ENCODE measurements at regions of chr17 and their contacts with region 1.

Region 1: GRCh38 chr17:39235555-39236449 is 10.1 kb upstream of the STAC2 start:
- DNase-seq: peak; percentile 82 to 91 (median 90)
- H3K4me3 ChIP-seq: no peak overlapping the region
- H3K27ac ChIP-seq: no peak overlapping the region
- H3K4me1 ChIP-seq: peaks cover 0 to 30% (median 21%) of the 10 kb centered on the region in 4 experiments
- H3K27me3 ChIP-seq: peaks cover 0 to 2% (median 0%) of the 10 kb centered on the region in 5 experiments

Region 2: DNA sequence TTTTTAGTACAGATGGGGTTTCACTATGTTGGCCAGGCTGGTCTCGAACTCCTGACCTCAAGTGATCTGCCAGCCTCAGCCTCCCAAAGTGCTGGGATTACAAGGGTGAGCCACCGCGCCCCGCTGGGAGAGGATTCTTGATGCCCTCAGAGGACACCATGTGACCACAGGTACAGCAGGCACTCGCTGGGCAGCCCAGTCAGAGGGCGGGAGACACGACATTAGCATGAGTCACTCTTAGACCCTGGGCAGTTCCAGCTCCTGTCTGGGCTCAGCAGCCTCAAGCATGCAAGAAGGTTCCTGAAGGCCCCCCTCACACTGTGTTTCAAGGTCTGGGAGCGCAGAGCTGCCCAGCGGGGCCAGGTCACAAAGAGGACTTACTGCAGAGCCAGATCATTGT is 21.9 kb before region 1 on chr17:
- CTCF ChIA-PET with region 1: interaction called, 425 read pairs
- POLR2A ChIA-PET with region 1: no interaction called
- DNase-seq: no peak
- H3K4me3 ChIP-seq: no peak overlapping the region
- H3K27ac ChIP-seq: no peak overlapping the region
- H3K4me1 ChIP-seq: peaks cover 0 to 25% (median 21%) of the 10 kb centered on the region in 4 experiments
- H3K27me3 ChIP-seq: peaks cover 0 to 28% (median 5%) of the 10 kb centered on the region in 5 experiments

Region 3: DNA sequence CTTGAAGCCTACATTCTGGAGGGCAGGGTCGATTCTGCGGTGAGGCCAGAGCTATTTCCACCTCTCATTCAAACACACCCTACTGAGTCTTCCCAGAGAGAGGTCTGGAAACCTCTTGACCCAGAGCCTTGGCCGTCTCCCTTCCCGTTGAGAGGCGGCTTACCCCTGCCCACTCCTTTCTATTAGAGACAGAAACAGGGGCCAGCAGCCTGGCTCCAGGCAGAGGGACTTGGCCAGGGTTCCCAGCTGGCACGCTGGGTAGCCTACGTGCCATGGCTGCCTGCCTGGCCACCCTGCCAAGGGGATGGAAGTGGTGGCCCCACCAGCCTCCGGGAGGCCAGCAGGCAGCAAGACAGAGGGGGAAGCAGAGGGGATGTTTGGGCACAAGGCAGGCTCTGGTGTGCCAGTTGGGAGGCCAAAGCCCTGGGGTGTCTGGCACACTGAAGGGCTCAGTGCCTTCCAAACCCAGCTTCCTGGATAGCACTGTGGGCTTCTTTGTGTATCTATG is 16.1 kb before region 1 on chr17:
- CTCF ChIA-PET with region 1: interaction called, 16 read pairs
- POLR2A ChIA-PET with region 1: no interaction called
- DNase-seq: no peak
- H3K4me3 ChIP-seq: no peak overlapping the region
- H3K27ac ChIP-seq: no peak overlapping the region
- H3K4me1 ChIP-seq: peaks cover 0 to 7% (median 4%) of the 10 kb centered on the region in 4 experiments
- H3K27me3 ChIP-seq: peaks cover 0 to 57% (median 29%) of the 10 kb centered on the region in 5 experiments

Region 4: DNA sequence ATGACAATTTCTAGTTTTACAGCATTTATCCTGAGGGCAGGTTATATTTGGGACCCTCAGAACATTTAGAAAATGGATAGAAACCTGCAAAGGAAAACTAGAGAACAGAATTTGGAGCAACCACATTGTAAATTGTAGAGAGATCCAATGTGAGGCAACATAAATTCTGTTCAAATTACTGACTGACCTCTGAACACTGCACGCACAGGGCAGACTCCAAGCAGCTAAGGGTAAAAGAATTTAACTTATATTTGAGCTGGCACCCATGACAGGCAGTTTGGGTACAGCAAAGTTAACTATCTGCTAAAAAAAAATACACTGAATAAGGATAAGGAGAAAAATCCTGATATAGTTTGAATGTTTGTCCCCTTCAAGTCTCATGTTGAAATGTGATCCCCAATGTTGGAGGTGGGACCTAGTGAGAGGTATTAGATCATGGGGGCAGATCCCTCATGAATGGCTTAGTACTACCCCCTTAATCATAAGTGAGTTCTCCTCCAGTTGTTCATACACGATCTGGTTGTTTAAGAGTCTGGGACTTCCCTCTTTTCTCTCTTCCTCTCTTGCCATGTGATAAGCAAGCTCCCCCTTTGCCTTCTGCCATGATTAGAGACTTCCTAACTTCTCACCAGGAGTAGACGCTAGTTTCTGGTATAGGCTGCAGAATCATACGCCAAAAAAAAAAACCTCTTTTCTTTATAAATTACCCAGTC is 89.9 kb after region 1 on chr17:
- CTCF ChIA-PET with region 1: no interaction called
- POLR2A ChIA-PET with region 1: no interaction called
- DNase-seq: peak; percentile 47 to 76 (median 68)
- H3K4me3 ChIP-seq: peak overlapping the region in 2 of 7 experiments; percentile 2 to 48
- H3K27ac ChIP-seq: peak overlapping the region in 1 of 2 experiments; percentile 45
- H3K4me1 ChIP-seq: peaks cover 0 to 15% (median 6%) of the 10 kb centered on the region in 4 experiments
- H3K27me3 ChIP-seq: no peaks in the 10 kb centered on the region

Region 5: DNA sequence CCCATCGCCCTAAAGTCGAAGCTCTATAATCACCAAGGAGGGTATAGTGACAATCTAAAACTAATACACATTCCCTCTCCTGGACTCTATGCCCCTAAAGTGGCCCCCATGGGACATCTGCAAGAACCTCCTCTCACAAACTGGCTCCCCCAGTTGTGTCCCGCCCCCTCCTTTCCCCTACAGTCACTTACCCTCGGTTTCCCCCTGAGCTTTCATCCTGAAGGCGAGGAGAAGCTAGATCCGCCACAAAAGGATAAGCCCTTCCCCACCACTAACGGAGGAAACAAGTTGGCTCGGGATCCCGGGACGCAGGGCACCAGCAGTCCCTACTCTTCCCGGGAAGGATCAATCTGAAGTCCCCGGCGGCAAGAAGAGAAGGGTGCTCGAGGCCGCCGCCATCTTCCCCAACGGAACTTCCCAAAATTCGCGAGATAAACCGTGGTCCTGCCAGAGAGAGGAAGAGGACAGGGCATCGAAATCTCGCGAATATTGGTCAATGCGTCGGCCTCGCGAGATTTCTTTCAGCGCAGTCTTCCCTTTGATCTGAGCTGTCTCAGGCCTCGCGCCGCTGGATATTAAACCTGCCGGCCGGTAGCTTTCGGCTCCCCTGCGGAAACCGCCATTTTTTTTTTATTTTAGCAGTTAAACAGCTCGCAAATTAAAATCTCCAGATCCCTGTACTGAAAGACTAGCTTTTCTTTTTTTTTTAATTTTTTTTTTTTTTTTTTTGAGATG is 215.2 kb after region 1 on chr17 and contains the start of gene MED1:
- CTCF ChIA-PET with region 1: no interaction called
- POLR2A ChIA-PET with region 1: no interaction called
- DNase-seq: peak; percentile 99
- H3K4me3 ChIP-seq: peak within 1 kb of the TSS; percentile 57 to 99 (median 92)
- H3K27ac ChIP-seq: peak within 1 kb of the TSS; percentile 98 to 99
- H3K4me1 ChIP-seq: peaks cover 7 to 21% (median 13%) of the 10 kb centered on the region in 4 experiments
- H3K27me3 ChIP-seq: no peaks in the 10 kb centered on the region

Measured in common myeloid progenitor, CD34-positive (primary cell).